ENCODE measurements at regions of chr3 and their contacts with region 1.

Region 1: GRCh38 chr3:153399636-153400035 is 237.6 kb downstream of the RAP2B start:
- DNase-seq: no peak
- H3K4me3 ChIP-seq: no peak overlapping the region
- H3K27ac ChIP-seq: no peak overlapping the region
- H3K4me1 ChIP-seq: no peaks in the 10 kb centered on the region
- H3K27me3 ChIP-seq: no peaks in the 10 kb centered on the region
- CTCF ChIP-seq: no peak
- POLR2A ChIP-seq: no peak

Region 2: GRCh38 chr3:152977366-152977765 is 422.3 kb before region 1 on chr3:
- intact Hi-C with region 1: loop called (anchors 10 kb)
- DNase-seq: no peak
- H3K4me3 ChIP-seq: no peak overlapping the region
- H3K27ac ChIP-seq: no peak overlapping the region
- H3K4me1 ChIP-seq: no peaks in the 10 kb centered on the region
- H3K27me3 ChIP-seq: no peaks in the 10 kb centered on the region
- CTCF ChIP-seq: no peak
- POLR2A ChIP-seq: no peak

Region 3: GRCh38 chr3:153372326-153372725 is 27.3 kb before region 1 on chr3:
- intact Hi-C with region 1: no loop called
- DNase-seq: peak in 1 of 2 donors; percentile 18
- H3K4me3 ChIP-seq: peak overlapping the region in 1 of 3 donors; percentile 5
- H3K27ac ChIP-seq: no peak overlapping the region
- H3K4me1 ChIP-seq: no peaks in the 10 kb centered on the region
- H3K27me3 ChIP-seq: no peaks in the 10 kb centered on the region
- CTCF ChIP-seq: no peak
- POLR2A ChIP-seq: no peak

Region 4: DNA sequence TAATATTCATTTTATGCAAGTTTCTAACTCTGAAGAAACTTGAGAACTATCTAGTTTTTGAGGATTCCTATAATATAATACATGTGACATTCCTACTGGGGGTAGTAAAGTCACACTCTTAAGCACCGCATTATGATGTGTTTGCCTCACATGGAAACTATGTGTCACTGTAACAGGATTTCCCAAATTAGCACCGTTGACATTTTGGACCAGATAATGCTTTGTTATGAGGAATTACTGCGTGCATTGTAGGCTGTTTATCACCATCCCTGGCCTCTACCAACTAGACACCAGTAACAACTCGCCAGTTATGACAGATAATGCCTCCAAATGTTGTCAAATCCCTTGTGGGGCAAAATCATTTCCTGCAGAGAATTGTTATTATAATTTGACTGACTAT is 30.2 kb after region 1 on chr3:
- intact Hi-C with region 1: no loop called
- DNase-seq: no peak
- H3K4me3 ChIP-seq: no peak overlapping the region
- H3K27ac ChIP-seq: no peak overlapping the region
- H3K4me1 ChIP-seq: no peaks in the 10 kb centered on the region
- H3K27me3 ChIP-seq: no peaks in the 10 kb centered on the region
- CTCF ChIP-seq: no peak
- POLR2A ChIP-seq: no peak

Region 5: GRCh38 chr3:153768561-153769469 is 369.2 kb after region 1 on chr3:
- intact Hi-C with region 1: no loop called
- DNase-seq: peak in 1 of 2 donors; percentile 25
- H3K4me3 ChIP-seq: no peak overlapping the region
- H3K27ac ChIP-seq: no peak overlapping the region
- H3K4me1 ChIP-seq: no peaks in the 10 kb centered on the region
- H3K27me3 ChIP-seq: no peaks in the 10 kb centered on the region
- CTCF ChIP-seq: peak in 2 of 3 donors; percentile 62 to 68
- POLR2A ChIP-seq: no peak

Region 6: DNA sequence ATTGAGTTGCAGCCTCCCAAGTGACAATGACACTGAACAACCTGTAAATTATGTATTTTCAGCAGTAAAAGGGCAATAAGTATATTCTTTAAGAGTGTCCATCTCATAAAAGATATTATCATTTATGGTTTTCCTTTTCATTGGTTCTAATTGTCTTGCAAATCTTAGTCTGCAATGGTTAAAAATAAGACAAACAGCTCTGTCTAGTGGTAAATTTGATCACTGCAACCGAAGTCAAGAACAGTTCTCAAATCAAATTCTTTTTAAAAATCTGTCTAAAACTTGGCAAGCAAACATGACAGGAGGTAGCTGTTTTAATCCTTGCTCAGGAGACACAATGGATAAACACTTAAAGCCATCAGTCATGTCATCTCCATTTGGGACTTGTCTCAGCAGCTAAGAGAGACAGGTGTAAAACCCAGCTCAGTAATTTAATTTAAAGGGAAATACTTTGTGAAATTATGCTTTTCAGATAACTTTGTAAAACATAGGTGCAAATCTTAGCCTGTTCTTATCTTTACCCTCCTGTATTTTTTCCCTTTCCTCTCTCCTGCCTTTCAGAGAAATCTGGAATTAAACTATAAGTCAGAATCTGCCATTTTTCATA is 571.2 kb after region 1 on chr3:
- intact Hi-C with region 1: no loop called
- DNase-seq: no peak
- H3K4me3 ChIP-seq: no peak overlapping the region
- H3K27ac ChIP-seq: no peak overlapping the region
- H3K4me1 ChIP-seq: no peaks in the 10 kb centered on the region
- H3K27me3 ChIP-seq: no peaks in the 10 kb centered on the region
- CTCF ChIP-seq: peak in 1 of 3 donors; percentile 16
- POLR2A ChIP-seq: no peak